Panc1 (cell line): ENCODE measurements at regions of chr11 and their contacts with region 1.

Region 1: DNA sequence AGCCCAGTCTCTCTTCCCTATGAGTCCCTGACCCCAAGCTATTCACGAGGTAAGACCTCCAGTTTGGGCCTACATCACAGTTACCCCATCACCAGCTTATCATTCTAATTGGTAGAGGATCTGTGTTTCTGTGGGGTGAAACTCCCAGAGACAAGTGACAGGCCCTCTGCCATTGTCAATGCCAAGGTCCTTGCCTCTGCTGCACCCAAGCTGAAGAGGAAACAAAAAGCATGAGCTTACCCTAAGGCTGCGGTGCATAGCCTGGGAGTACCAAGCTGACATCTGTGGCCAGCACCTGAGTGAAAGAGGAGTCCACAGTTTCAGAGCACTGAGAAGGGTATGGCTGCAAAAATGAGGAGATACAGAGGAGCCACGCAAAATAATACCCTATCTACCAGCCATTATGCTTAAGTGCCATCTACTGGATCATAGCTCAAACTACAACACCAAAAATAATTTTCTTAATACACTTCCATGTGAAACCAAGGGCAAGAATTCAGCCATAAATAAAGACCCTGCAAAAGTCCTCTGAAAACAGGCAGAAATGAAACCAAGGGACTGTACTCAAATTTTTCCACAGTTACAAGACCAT is 62.3 kb upstream of the ANO5 start:
- DNase-seq: no peak
- ATAC-seq: no peak
- H3K4me3 ChIP-seq: no peak overlapping the region
- H3K27ac ChIP-seq: no peak overlapping the region
- H3K4me1 ChIP-seq: no peaks in the 10 kb centered on the region
- H3K27me3 ChIP-seq: no peaks in the 10 kb centered on the region
- CTCF ChIP-seq: peak; percentile 65

Region 2: GRCh38 chr11:21933095-21933494 is 197.5 kb before region 1 on chr11:
- CTCF ChIA-PET with region 1: no interaction called
- POLR2A ChIA-PET with region 1: no interaction called
- in situ Hi-C with region 1: no loop called
- intact Hi-C with region 1: loop called (anchors 10 kb)
- DNase-seq: no peak
- ATAC-seq: no peak
- H3K4me3 ChIP-seq: no peak overlapping the region
- H3K27ac ChIP-seq: no peak overlapping the region
- H3K4me1 ChIP-seq: no peaks in the 10 kb centered on the region
- H3K27me3 ChIP-seq: no peaks in the 10 kb centered on the region
- CTCF ChIP-seq: peak; percentile 36; the same call in 1 of the 2 replicates

Region 3: GRCh38 chr11:22079133-22079872 is 51.3 kb before region 1 on chr11:
- CTCF ChIA-PET with region 1: no interaction called
- POLR2A ChIA-PET with region 1: no interaction called
- in situ Hi-C with region 1: no loop called
- intact Hi-C with region 1: loop called (anchors 10 kb)
- DNase-seq: no peak
- ATAC-seq: no peak
- H3K4me3 ChIP-seq: no peak overlapping the region
- H3K27ac ChIP-seq: no peak overlapping the region
- H3K4me1 ChIP-seq: no peaks in the 10 kb centered on the region
- H3K27me3 ChIP-seq: no peaks in the 10 kb centered on the region
- CTCF ChIP-seq: no peak